ENCODE measurements at regions of chr6 and their contacts with region 1.

Region 1: GRCh38 chr6:166402582-166403277 is 20.0 kb upstream of the MPC1 start:
- DNase-seq: peak; percentile 16
- ATAC-seq: no peak
- H3K4me3 ChIP-seq: no peak overlapping the region
- H3K27ac ChIP-seq: no peak overlapping the region
- H3K4me1 ChIP-seq: no peaks in the 10 kb centered on the region
- H3K27me3 ChIP-seq: peaks cover 5% of the 10 kb centered on the region; the same call in 1 of the 2 replicates
- CTCF ChIP-seq: no peak
- POLR2A ChIP-seq: no peak
- RAD21 ChIP-seq: no peak

Region 2: DNA sequence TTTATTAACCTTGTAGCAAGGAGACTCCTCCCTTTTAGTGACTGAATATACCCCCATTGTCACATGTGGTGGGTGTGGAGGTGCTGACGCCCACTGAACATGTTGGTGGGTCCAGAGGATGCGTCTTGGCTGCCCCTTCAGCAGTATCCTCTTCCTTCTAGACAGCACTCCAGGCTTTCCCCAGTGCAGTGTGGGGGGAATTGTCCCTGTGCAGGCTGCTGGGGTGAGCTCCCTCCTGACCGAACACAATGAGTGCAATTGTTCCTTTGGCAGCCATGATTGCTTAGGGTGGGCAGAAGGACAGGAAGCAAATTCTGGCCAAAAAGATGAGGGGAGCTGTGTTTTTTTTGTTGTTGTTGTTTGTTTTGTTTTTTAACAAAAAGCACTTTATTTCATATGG is 530.4 kb before region 1 on chr6:
- CTCF ChIA-PET with region 1: no interaction called
- POLR2A ChIA-PET with region 1: no interaction called
- dilution Hi-C with region 1: no loop called
- in situ Hi-C with region 1: no loop called
- intact Hi-C with region 1: no loop called
- DNase-seq: no peak
- ATAC-seq: no peak
- H3K4me3 ChIP-seq: no peak overlapping the region
- H3K27ac ChIP-seq: no peak overlapping the region
- H3K4me1 ChIP-seq: peaks cover 8% of the 10 kb centered on the region
- H3K27me3 ChIP-seq: no peaks in the 10 kb centered on the region; the same call in 1 of the 2 replicates
- CTCF ChIP-seq: no peak
- POLR2A ChIP-seq: no peak
- RAD21 ChIP-seq: no peak

Region 3: DNA sequence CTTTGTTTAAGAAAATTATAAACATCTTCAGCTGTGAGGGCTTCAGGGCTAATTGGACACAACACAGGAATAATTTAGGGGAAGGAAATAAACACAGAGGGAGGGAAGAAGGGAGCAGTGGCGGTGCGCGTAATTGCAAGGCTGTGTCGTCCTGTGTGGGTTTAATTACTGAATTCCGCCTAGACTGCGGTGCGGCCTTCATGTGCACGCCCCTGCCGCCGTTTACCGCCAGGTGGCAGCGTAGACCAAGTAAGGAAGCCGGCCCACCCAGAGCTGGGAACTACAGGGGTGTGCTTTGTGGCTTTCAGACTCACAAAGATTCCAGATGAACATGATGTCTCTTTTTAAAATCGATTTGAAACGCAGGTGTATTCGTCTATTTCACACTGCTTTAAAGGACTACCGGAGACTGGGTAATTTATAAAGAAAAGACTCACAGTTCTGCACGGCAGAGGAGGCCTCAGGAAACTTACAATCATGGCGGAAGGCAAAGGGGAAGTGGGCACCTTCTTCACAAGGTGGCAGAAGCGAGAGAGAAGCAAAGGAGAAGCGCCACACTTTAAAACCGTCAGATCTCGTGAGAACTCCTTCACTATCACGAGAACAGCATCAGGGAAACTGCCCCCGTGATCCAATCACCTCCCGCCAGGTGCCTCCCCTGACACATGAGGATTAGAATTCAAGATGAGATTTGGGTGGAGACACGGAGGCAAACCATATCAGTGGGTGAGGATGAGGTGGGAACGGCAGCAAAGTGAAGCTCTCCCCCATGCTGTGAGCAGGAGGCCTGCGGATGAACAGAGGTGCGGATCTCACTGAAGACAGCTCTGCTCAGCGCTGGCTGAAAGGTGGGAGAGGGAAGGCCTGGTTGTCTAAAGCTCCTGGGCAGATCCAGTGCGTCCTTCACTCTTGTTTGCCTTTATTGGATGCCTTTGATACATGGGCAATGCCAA is 517.6 kb before region 1 on chr6:
- CTCF ChIA-PET with region 1: no interaction called
- POLR2A ChIA-PET with region 1: no interaction called
- dilution Hi-C with region 1: no loop called
- in situ Hi-C with region 1: no loop called
- intact Hi-C with region 1: loop called (anchors 2 kb)
- DNase-seq: peak; percentile 68
- ATAC-seq: peak; percentile 96
- H3K4me3 ChIP-seq: no peak overlapping the region
- H3K27ac ChIP-seq: no peak overlapping the region
- H3K4me1 ChIP-seq: peaks cover 7% of the 10 kb centered on the region
- H3K27me3 ChIP-seq: no peaks in the 10 kb centered on the region
- CTCF ChIP-seq: peak; percentile 95
- POLR2A ChIP-seq: peak; percentile 46; the same call in 1 of the 2 replicates
- RAD21 ChIP-seq: peak; percentile 95

Region 4: DNA sequence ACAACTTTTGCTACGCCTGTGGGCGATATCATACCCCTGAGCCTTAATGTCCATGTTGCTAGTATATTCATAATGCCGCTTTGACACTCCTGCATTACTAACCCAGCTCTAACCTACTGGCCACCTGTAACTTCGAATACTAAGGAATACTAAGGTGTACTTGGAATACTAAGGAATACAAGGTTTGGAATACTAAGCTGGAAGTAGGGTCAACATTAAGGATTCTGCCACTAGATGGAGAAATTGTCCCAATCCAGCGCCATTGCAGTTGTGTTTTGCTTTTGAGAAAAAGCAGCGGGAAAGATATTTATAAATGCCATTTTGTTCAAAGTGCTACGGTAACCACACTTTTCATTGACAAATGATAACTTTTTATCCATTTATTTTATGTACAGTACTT is 245.8 kb before region 1 on chr6:
- CTCF ChIA-PET with region 1: no interaction called
- POLR2A ChIA-PET with region 1: no interaction called
- dilution Hi-C with region 1: no loop called
- in situ Hi-C with region 1: no loop called
- intact Hi-C with region 1: loop called (anchors 1 kb)
- DNase-seq: peak; percentile 9
- ATAC-seq: no peak
- H3K4me3 ChIP-seq: no peak overlapping the region
- H3K27ac ChIP-seq: no peak overlapping the region
- H3K4me1 ChIP-seq: no peaks in the 10 kb centered on the region
- H3K27me3 ChIP-seq: peaks cover 3% of the 10 kb centered on the region; the same call in 1 of the 2 replicates
- CTCF ChIP-seq: no peak
- POLR2A ChIP-seq: no peak
- RAD21 ChIP-seq: peak; percentile 25; the same call in 1 of the 2 replicates

Region 5: DNA sequence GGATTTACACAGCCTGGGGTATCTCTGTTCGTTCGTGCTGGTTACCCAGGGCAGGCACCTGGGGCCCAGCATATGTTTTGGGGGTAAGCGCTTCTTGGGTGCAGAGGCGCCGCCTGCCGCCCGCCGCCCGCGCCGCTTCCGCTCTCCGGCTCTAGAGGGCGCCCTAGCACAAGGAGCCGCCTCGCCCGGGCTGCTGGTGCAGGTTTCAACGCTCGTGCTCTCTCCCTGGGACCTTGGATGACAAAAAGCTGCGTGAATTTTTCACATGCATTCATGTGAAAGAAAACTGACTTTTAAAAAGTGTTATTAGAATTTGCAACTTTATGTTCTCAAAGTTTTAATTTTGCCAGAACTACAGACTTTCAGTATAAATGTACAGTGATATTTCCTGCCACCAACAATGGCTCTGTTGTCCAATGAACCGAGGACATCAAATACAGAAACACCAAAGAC is 127.0 kb before region 1 on chr6:
- CTCF ChIA-PET with region 1: interaction called, 20 read pairs
- POLR2A ChIA-PET with region 1: no interaction called
- dilution Hi-C with region 1: no loop called
- in situ Hi-C with region 1: loop called (anchors 5 kb)
- intact Hi-C with region 1: loop called (anchors 1 kb)
- DNase-seq: peak; percentile 15
- ATAC-seq: peak; percentile 97
- H3K4me3 ChIP-seq: no peak overlapping the region
- H3K27ac ChIP-seq: no peak overlapping the region
- H3K4me1 ChIP-seq: no peaks in the 10 kb centered on the region
- H3K27me3 ChIP-seq: peaks cover 10% of the 10 kb centered on the region; the same call in 1 of the 2 replicates
- CTCF ChIP-seq: peak; percentile 98
- POLR2A ChIP-seq: no peak
- RAD21 ChIP-seq: peak; percentile 89

Region 6: DNA sequence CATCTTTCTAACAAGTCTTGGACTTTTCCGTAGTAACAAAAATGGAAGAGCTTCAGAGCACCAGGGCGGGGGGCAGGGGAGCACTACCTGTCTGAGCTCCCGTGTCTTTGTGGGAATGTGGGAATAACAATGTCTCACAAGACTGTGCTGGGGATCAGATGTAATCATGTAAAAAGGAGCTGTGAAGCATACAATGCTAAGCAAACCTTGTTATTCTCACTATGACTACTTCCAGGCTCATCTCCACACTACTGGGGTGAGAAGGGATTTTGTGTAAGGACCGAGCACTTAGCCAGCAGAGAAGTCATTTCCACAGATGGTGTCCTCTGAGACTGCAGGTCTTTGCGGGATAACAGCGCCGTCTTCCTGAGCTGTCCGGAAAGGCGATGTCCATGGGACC is 121.6 kb before region 1 on chr6:
- CTCF ChIA-PET with region 1: interaction called, 20 read pairs
- POLR2A ChIA-PET with region 1: no interaction called
- dilution Hi-C with region 1: no loop called
- in situ Hi-C with region 1: loop called (anchors 5 kb)
- intact Hi-C with region 1: no loop called
- DNase-seq: no peak
- ATAC-seq: no peak
- H3K4me3 ChIP-seq: no peak overlapping the region
- H3K27ac ChIP-seq: no peak overlapping the region
- H3K4me1 ChIP-seq: no peaks in the 10 kb centered on the region
- H3K27me3 ChIP-seq: peaks cover 20% of the 10 kb centered on the region
- CTCF ChIP-seq: no peak
- POLR2A ChIP-seq: no peak
- RAD21 ChIP-seq: no peak

Region 7: DNA sequence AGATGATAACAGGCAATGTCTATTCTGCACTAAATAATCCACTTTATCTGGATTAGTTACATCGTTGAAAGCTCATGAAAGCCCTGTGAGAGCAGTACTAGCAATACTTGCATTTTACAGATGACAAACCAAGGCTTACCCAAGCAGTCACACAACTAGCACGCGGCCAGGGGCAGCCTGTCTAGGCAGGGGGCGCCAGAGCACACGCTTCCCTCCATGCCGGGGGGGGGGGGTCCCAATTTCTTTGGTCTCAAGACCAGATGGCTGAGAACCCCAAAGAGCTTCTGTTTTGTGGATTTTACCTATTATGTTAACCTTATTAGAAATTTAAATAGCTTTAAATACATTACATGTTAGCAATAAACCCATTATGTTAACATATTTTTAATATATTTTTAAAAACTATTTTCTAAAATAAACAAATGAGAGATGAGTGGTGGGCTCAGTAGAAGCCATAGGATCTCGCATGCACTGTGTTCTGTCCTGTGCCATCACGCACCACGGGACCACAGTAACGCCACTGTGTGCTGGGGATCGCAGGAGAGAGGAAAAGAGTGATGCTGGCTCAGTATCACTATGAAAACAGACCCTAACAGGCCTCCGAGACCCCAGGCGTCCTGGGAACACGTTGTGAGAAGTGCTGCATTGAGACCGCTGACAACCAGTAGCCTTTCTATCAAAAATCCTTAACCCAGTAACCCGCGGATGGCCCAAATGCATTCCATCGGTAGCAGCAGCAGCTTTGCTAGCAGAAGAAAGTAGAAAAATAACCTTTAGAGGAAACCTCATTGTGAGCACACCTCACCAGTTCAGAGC is 89.3 kb before region 1 on chr6:
- CTCF ChIA-PET with region 1: interaction called, 5 read pairs
- POLR2A ChIA-PET with region 1: no interaction called
- dilution Hi-C with region 1: no loop called
- in situ Hi-C with region 1: no loop called
- intact Hi-C with region 1: loop called (anchors 1 kb)
- DNase-seq: peak; percentile 45
- ATAC-seq: peak; percentile 77
- H3K4me3 ChIP-seq: no peak overlapping the region
- H3K27ac ChIP-seq: no peak overlapping the region
- H3K4me1 ChIP-seq: no peaks in the 10 kb centered on the region; the same call in 1 of the 2 replicates
- H3K27me3 ChIP-seq: peaks cover 21% of the 10 kb centered on the region
- CTCF ChIP-seq: peak; percentile 63
- POLR2A ChIP-seq: no peak
- RAD21 ChIP-seq: peak; percentile 62

Region 8: DNA sequence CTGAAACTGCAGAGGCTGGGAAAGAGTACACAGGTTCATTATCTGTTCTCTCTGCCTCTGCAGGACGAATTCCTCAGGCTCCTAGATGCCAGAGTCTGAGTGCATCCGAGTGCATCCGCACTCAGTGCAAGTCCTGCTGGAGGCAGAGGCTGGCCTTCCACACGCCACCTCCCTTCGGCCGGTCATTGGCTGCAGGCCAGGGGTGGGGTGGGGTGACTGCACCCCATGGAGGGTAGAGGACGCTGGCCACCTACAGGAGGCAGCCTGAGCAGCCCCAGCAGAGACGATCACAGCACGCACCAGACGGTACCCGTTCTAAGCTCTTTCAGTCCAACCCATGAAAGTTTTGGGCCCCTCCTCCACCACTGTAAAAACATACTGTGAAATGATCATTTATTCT is 72.1 kb before region 1 on chr6:
- CTCF ChIA-PET with region 1: no interaction called
- POLR2A ChIA-PET with region 1: no interaction called
- dilution Hi-C with region 1: no loop called
- in situ Hi-C with region 1: no loop called
- intact Hi-C with region 1: no loop called
- DNase-seq: peak; percentile 23
- ATAC-seq: peak; percentile 86
- H3K4me3 ChIP-seq: no peak overlapping the region
- H3K27ac ChIP-seq: no peak overlapping the region
- H3K4me1 ChIP-seq: peaks cover 11% of the 10 kb centered on the region; the same call in 1 of the 2 replicates
- H3K27me3 ChIP-seq: no peaks in the 10 kb centered on the region
- CTCF ChIP-seq: peak; percentile 19; the same call in 1 of the 2 replicates
- POLR2A ChIP-seq: no peak
- RAD21 ChIP-seq: no peak